CD8-positive, alpha-beta T cell (primary cell): ENCODE measurements at regions of chr9 and their contacts with region 1.

Region 1: GRCh38 chr9:121557581-121558447 is 58.2 kb upstream of the GGTA1 start:
- DNase-seq: peak in 3 of 9 experiments; percentile 12 to 43 (median 16)
- ATAC-seq: no peak
- H3K4me3 ChIP-seq: no peak overlapping the region
- H3K4me3 Mint-ChIP-seq: no peak overlapping the region
- H3K27ac ChIP-seq: peak overlapping the region in 1 of 2 experiments; percentile 14
- H3K27ac Mint-ChIP-seq: no peak overlapping the region
- H3K4me1 ChIP-seq: peaks cover 7% of the 10 kb centered on the region
- H3K4me1 Mint-ChIP-seq: peaks cover 9% of the 10 kb centered on the region
- H3K27me3 ChIP-seq: peaks cover 0 to 2% of the 10 kb centered on the region in 2 experiments
- H3K27me3 Mint-ChIP-seq: peaks cover 7% of the 10 kb centered on the region
- CTCF ChIP-seq: no peak

Region 2: GRCh38 chr9:121545875-121546423 is 11.9 kb before region 1 on chr9:
- CTCF ChIA-PET with region 1: interaction called, 16 read pairs
- POLR2A ChIA-PET with region 1: no interaction called
- intact Hi-C with region 1: no loop called
- DNase-seq: peak; percentile 28 to 72 (median 62)
- ATAC-seq: peak; percentile 59
- H3K4me3 ChIP-seq: no peak overlapping the region
- H3K4me3 Mint-ChIP-seq: no peak overlapping the region
- H3K27ac ChIP-seq: no peak overlapping the region
- H3K27ac Mint-ChIP-seq: no peak overlapping the region
- H3K4me1 ChIP-seq: peaks cover 14% of the 10 kb centered on the region
- H3K4me1 Mint-ChIP-seq: peaks cover 2% of the 10 kb centered on the region
- H3K27me3 ChIP-seq: peaks cover 4 to 7% of the 10 kb centered on the region in 2 experiments
- H3K27me3 Mint-ChIP-seq: peaks cover 33% of the 10 kb centered on the region
- CTCF ChIP-seq: peak; percentile 57